ENCODE measurements at regions of chr9 and their contacts with region 1.

Region 1: DNA sequence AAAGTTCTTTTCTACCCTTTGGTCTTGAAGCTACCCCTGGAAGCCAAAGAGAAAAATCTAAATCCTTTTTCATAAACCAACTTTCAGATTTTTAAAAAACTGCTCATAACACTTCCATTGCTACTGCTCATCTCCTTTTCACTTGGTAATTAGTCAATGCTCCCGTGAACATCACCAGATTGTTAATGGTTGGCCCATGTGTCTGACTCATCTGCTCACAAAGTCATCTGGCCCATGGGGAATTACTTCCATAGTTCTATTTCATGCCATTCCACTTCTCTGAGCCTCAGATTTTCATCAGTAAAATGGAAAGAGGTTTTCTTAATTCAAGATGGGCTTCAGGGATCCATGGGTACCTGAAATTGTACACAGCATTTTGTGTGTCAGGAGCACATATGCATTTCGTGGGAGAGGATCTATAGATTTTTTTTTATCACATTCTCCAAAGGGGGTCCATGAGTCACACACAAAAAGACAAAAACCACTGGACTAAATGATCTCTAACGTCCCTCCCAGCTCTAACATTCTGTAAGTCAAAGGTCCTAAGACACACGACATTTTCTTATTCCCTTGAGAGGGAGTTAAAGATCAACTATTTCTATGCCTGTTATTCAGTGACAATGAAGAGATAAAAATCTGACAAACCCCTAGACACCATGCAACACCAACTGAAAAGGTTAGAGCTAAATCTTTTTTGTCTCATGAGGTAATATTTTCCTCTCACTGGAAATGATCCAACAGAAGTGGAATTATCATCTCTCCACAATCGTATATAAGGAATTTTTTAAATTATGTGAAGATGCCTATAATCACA is 75.4 kb downstream of the TEX10 start:
- DNase-seq: no peak
- ATAC-seq: no peak
- H3K4me3 ChIP-seq: no peak overlapping the region
- H3K27ac ChIP-seq: no peak overlapping the region
- H3K4me1 ChIP-seq: no peaks in the 10 kb centered on the region
- H3K27me3 ChIP-seq: no peaks in the 10 kb centered on the region
- CTCF ChIP-seq: no peak

Region 2: DNA sequence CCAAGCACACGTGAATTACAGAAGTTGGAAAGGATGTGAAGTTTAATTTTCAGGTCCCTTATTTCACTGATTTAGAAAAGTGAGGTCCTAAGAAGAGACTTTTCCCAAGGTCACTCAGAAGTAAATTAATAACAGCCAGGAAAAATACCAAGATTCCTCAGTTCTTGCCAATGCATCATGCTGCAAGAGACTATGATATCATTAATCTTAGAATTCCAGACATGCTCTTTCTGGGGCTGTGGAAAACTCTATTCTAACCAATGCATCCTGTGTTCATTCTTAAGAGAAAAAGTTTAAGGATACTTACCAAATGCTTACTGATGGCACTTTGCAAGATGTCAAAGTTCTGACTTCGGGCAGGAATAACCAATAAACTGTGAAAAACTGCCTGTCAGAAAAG is 32.6 kb after region 1 on chr9:
- CTCF ChIA-PET with region 1: no interaction called
- POLR2A ChIA-PET with region 1: no interaction called
- in situ Hi-C with region 1: no loop called
- intact Hi-C with region 1: no loop called
- DNase-seq: no peak
- ATAC-seq: no peak
- H3K4me3 ChIP-seq: no peak overlapping the region
- H3K27ac ChIP-seq: no peak overlapping the region
- H3K4me1 ChIP-seq: no peaks in the 10 kb centered on the region
- H3K27me3 ChIP-seq: no peaks in the 10 kb centered on the region
- CTCF ChIP-seq: no peak

Region 3: DNA sequence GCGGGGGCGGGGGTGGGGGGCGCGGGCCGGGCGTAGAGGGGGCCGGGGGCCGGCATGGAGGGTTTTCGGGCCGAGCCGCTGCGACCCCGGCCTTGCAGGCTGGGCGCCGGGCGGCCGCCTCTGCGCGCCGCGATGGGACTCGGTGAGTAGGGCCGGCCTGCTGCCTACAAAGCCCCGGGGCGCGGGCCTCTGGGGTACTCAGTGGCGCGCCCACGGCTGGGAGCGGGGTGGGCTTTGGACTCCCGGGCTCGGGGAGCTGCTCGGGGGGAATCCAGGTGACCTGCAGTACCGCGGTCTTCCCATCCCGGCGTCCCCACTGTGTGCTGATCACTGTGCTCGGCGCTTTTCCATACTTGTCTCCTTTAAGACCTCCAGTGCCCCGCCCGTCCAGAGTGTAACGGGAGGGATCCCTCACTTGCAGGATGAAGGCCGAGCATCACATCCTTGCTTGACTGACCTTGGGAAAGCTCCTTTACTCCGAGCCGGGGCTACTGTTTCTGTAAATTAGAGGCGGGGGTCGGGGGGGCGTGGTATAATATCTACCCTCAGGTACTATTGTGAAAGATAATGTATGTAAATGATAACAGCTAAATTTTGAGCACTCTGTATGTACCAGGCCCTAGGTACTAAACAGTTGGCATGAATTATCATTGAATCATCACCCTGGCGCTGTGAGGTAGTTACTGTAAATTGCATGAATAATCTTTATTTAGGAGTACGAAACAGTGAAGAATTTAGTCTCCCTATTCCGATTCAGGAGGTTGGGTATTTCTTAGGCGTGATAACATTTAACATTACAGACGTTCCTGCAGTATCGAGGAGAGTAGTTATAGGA is 150.3 kb after region 1 on chr9:
- CTCF ChIA-PET with region 1: no interaction called
- POLR2A ChIA-PET with region 1: no interaction called
- in situ Hi-C with region 1: no loop called
- intact Hi-C with region 1: no loop called
- DNase-seq: no peak
- ATAC-seq: peak; percentile 76
- H3K4me3 ChIP-seq: peak overlapping the region; percentile 67 to 73
- H3K27ac ChIP-seq: peak overlapping the region; percentile 92
- H3K4me1 ChIP-seq: peaks cover 20% of the 10 kb centered on the region
- H3K27me3 ChIP-seq: no peaks in the 10 kb centered on the region
- CTCF ChIP-seq: no peak

Region 4: DNA sequence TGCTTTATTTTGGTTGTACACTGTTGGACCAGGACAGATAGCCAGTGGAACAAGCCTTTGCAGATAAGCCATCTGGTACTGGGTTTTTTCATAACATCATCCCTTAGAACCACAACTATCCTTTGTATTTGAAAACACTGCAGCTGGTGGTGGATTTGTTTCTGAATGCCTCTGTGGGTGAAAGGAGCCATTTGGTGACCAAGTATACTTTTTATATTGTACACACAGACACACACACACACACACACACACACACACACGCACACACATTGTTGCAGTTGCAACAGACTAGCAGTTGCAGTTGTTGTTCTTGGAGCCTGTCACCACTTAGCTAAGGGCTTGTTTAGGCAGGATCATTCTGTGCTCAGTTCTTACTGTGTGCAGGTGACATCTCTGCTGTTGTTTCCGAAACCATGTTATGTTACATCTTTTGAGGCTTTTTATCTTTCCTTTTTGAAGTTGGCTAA is 277.6 kb after region 1 on chr9:
- CTCF ChIA-PET with region 1: interaction called, 15 read pairs
- POLR2A ChIA-PET with region 1: no interaction called
- in situ Hi-C with region 1: no loop called
- intact Hi-C with region 1: no loop called
- DNase-seq: no peak
- ATAC-seq: no peak
- H3K4me3 ChIP-seq: no peak overlapping the region
- H3K27ac ChIP-seq: no peak overlapping the region
- H3K4me1 ChIP-seq: no peaks in the 10 kb centered on the region
- H3K27me3 ChIP-seq: no peaks in the 10 kb centered on the region
- CTCF ChIP-seq: no peak

Measured in Panc1 (cell line).